ENCODE measurements at regions of chr10 and their contacts with region 1.

Region 1: GRCh38 chr10:113563306-113564088 is 10.6 kb downstream of the HABP2 start:
- DNase-seq: peak; percentile 87
- ATAC-seq: peak; percentile 91
- H3K4me3 Mint-ChIP-seq: peak overlapping the region; percentile 57
- H3K27ac Mint-ChIP-seq: no peak overlapping the region
- H3K4me1 Mint-ChIP-seq: peaks cover 48% of the 10 kb centered on the region
- H3K27me3 Mint-ChIP-seq: peaks cover 66% of the 10 kb centered on the region
- CTCF ChIP-seq: peak; percentile 91

Region 2: GRCh38 chr10:113506476-113506875 is 57.0 kb before region 1 on chr10:
- CTCF ChIA-PET with region 1: no interaction called
- POLR2A ChIA-PET with region 1: no interaction called
- DNase-seq: no peak
- ATAC-seq: no peak
- H3K4me3 Mint-ChIP-seq: no peak overlapping the region
- H3K27ac Mint-ChIP-seq: no peak overlapping the region
- H3K4me1 Mint-ChIP-seq: no peaks in the 10 kb centered on the region
- H3K27me3 Mint-ChIP-seq: peaks cover 2% of the 10 kb centered on the region; the same call in 1 of the 2 replicates
- CTCF ChIP-seq: no peak

Region 3: DNA sequence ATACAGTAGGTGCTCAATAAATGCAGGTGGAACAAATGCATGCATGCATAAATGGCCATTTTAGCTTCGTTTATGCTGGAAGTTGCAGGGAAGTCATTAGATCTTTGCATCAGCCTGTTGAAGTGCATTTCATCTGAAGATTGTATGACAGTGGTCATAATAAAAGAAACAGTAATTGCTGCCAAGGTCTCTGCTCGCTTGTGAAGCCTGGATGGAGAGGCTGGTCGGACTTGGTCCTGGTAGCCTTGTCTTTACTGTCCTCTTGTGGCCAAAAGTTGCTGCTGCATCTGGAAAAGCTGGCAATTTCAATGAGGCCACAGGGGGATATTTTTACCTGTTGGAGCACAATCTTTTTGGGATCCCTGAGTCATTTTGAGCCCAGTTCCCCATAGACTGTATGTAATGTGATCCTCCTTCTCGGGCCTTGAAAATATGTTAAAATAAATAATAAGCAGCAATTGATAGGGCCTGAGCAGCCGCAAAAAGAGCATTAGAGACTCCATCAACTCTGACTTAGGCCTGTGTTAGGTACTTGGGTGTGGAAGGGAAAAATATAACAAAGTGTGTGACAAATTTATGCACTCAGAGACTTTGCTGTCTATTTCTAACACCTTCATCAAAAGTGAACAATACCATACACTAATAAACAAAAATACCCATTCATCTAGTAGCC is 42.2 kb before region 1 on chr10:
- CTCF ChIA-PET with region 1: interaction called, 18 read pairs
- POLR2A ChIA-PET with region 1: no interaction called
- DNase-seq: peak; percentile 72
- ATAC-seq: peak; percentile 68
- H3K4me3 Mint-ChIP-seq: no peak overlapping the region
- H3K27ac Mint-ChIP-seq: no peak overlapping the region
- H3K4me1 Mint-ChIP-seq: peaks cover 7% of the 10 kb centered on the region; the same call in 1 of the 2 replicates
- H3K27me3 Mint-ChIP-seq: peaks cover under 1% of the 10 kb centered on the region; the same call in 1 of the 2 replicates
- CTCF ChIP-seq: peak; percentile 79

Region 4: DNA sequence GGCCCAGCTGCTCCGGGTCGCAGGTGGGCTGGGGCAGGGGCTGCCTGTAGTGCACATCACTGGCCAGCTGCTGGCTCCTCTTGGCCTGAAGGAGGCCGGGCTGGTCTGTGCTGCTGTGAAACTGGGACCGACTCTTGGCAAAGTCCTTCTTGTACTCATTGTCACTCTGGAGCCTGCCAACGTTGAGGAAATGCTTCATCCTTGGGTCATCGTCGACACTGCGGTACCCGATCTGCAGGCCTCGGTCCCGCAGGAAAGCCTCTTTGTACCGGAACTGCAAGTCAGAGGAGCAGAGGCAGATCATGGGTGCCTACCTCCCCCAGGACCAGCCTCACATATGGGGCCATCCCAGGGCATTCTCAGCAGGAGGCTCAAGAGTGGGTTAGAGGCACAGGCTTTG is 27.1 kb after region 1 on chr10:
- CTCF ChIA-PET with region 1: no interaction called
- POLR2A ChIA-PET with region 1: no interaction called
- DNase-seq: no peak
- ATAC-seq: no peak
- H3K4me3 Mint-ChIP-seq: no peak overlapping the region
- H3K27ac Mint-ChIP-seq: no peak overlapping the region
- H3K4me1 Mint-ChIP-seq: no peaks in the 10 kb centered on the region
- H3K27me3 Mint-ChIP-seq: peaks cover 2% of the 10 kb centered on the region; the same call in 1 of the 2 replicates
- CTCF ChIP-seq: no peak

Region 5: DNA sequence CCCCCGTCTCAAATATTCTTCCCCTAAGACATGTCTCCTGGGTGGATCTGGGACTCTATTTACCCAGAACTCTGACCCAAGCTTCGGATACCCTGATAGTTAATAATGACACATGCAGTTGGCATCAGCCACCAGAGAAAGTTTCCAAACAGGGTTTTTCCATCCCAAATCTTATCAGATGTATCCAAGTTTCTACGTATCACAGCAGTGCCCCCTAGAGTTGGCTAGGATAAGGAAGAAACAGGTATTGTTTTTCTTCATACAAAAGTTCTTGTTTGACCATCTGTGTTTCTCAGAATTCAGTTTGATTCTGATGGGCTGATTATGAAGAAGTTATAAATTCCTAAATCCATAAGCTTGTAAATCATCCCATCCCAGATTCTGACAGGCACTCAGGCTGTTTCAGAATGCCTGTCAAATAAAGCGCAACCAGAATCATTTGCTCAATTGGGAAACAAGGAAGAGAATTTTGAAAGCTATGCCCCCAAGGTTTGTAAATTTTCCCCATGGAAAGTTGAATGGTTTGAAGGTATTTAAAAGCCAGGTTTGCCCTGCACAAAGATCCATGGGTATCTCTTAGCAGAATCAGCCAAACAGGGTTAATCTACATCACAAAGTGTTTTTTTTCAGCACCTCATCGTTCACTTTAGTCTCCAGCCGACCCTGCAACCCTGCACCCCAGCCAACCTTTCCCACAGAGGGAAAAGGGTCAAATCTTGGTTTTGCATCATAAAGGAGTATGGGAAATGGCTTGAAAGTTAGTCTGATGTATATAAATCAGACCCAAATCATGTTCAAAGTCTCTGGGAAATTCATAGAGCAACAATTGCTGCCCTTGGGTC is 53.0 kb after region 1 on chr10:
- CTCF ChIA-PET with region 1: interaction called, 12 read pairs
- POLR2A ChIA-PET with region 1: no interaction called
- DNase-seq: no peak
- ATAC-seq: peak; percentile 60
- H3K4me3 Mint-ChIP-seq: peak overlapping the region; percentile 59
- H3K27ac Mint-ChIP-seq: peak overlapping the region; percentile 61
- H3K4me1 Mint-ChIP-seq: peaks cover 79% of the 10 kb centered on the region
- H3K27me3 Mint-ChIP-seq: peaks cover 38% of the 10 kb centered on the region
- CTCF ChIP-seq: peak; percentile 33

Measured in WTC11 (cell line).